Mucosa of descending colon (tissue), 3 donors: ENCODE measurements at regions of chr16 and their contacts with region 1.

Region 1: DNA sequence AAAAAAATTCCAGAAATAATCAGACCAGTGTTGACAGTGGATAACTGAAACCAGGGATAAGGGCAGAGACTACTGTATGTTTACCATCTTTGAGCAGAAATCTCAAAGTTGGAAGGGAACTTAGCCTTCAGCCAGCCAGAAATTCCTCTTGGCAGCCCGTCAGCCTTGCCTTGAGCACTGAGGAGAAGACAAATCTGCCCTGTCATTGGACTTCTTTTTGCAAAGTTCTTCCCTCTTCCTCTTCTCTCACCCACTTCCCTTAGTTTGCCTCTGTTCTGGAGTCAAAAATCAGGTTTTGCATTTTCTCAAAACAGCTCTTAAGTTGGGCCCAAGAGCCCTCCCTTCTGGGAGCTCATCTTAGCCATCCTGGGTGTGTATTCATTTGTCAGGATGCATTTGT is 6.2 kb downstream of the TUFM start:
- DNase-seq: no peak
- ATAC-seq: no peak
- H3K4me3 ChIP-seq: no peak overlapping the region
- H3K4me1 ChIP-seq: peaks cover 4% of the 10 kb centered on the region
- CTCF ChIP-seq: no peak

Region 2: DNA sequence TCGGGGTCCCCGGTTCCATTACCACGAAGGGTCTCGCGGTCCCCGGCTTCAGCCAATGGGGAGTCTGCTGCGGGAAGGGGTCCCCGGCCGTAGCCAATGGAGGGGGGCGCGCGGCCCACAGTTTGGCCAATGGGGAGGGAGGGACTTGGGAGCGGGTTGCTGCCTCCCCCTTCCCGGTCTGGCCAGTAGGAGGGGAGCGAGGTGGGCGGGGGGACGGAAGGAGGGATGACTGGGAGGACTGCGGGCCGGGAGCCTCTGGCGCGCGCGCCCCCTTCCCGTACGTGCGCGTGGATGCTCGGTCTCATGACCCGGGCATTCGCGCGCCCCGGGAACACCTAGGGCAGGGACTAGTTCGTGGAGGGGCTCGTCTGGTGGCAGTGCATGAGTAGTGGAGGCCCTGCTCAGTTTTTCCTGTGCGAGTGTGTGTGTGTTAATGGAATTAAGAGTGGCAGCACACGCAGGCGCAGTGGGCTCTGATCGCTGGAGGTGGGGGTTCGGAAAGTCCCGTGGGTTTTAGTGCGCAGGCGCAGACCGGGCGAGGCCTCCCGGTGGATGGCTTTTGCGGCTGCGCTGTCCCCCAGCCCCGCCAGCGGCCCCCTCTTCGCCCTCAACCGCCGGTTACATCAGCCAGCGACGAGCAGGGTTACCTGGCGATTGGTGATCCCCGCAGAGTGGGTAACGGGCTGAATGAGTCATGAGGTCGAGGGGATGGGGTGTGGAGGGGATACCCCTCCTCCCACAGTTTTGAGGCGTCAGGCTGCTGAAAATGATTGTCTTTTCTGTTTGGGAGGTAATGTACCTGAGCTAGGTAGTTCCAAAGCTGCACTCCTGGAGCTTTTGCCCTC is 15.8 kb before region 1 on chr16:
- intact Hi-C with region 1: loop called in 1 of 2 experiments (anchors 2 kb)
- DNase-seq: peak; percentile 94 to 98 (median 97)
- ATAC-seq: peak; percentile 88
- H3K4me3 ChIP-seq: peak overlapping the region; percentile 100
- H3K4me1 ChIP-seq: peaks cover 23% of the 10 kb centered on the region
- CTCF ChIP-seq: peak; percentile 18

Region 3: DNA sequence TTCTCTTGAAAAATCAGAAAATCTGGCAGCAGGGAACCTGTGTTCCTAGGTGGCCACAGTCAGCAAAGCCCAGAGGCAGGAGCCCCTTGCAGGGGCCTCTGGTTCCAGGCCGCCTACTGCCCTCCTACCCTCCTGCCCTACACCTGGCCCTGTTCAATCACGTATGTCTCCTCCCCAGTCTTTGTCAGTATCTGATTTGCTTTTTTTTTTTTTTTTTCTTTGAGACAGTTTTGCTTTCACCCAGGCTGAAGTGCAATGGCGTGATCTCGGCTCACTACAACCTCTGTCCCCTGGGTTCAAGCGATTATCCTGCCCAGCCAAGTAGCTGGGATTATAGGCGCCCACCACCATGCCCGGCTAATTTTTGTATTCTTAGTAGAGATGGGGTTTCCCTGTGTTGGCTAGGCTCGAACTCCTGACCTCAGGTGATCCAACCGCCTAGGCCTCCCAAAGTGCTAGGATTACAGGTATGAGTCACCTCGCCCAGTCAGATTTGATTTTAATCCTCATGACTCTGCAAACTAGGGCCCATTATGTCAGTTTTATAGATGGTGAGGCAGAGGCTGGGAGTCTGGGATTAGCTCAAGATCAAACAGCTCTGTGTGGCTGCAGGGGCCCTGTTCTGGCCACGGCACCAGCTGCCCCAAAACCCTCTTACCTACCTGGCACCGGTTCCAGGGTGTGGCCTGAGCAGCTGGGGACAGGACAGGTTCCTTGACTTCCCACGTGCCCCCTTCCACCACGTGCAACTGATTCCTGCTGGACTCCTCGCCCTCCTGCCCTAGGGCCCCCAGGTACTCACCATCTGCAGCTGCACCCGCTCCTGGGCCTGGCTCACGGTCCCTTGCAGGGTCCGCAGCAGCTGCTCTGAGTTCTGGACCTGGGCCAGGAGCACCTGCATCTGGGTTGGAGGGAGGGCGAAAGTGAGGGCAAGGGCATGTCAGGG is 70.5 kb after region 1 on chr16:
- intact Hi-C with region 1: no loop called
- DNase-seq: peak; percentile 75 to 76 (median 75)
- ATAC-seq: peak; percentile 88
- H3K4me3 ChIP-seq: no peak overlapping the region
- H3K4me1 ChIP-seq: peaks cover 8% of the 10 kb centered on the region
- CTCF ChIP-seq: no peak

Region 4: GRCh38 chr16:28924732-28925385 is 85.0 kb after region 1 on chr16 and contains the start of gene RABEP2:
- intact Hi-C with region 1: no loop called
- DNase-seq: peak; percentile 98 to 99 (median 99)
- ATAC-seq: peak; percentile 90
- H3K4me3 ChIP-seq: peak within 1 kb of the TSS; percentile 55
- H3K4me1 ChIP-seq: peaks cover 6% of the 10 kb centered on the region
- CTCF ChIP-seq: no peak
- total RNA-seq, gene RABEP2: 35.1 to 43.2 (median 35.7) TPM

Region 5: DNA sequence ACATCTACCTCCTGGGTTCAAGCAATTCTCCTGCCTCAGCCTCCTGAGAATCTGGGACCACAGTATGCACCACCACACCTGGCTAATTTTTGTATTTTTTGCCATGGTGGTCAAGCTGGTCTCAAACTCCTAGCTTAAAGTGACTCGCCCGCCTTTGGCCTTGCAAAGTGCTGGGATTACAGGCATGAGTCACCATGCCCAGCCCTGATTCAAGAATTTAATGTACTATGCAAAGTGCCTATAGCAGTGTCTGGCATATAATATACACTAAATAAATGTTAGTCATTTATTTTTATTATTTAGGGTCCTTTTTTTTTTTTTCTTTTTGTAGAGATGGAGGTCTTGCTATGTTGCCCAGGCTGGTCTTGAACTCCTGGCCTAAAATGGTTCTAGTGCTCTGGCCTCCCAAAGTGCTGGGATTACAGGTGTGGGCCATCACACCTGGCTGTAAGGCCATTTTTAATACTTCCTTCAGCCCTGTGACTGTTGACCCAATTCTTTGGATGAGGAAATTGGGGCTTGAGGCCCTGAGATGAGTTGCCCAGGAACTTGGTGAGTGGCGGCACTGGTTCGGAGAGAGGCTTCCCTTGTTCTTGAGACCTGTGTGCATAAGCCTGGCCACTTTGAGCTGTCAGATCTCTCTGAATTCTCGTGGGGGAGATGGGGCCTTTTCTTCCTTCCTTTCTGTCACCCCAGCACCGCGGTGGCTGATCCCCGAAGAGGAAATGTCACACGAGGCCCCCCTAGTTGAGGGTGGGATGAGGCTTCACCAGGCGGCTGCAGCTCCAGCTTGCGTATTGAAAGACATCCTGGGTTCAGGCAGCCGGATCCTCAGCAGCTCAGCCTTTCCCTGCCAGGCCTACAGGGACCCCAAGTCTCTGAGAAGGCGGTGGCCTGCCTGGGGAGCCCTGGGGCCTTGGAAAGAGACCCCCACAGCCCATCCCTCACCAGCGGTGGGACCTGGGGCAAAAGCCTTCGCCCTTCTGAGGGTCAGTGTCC is 183.7 kb after region 1 on chr16:
- intact Hi-C with region 1: no loop called
- DNase-seq: no peak
- ATAC-seq: peak; percentile 44
- H3K4me3 ChIP-seq: no peak overlapping the region
- H3K4me1 ChIP-seq: no peaks in the 10 kb centered on the region
- CTCF ChIP-seq: no peak